ENCODE measurements at regions of chr1 and their contacts with region 1.

Region 1: DNA sequence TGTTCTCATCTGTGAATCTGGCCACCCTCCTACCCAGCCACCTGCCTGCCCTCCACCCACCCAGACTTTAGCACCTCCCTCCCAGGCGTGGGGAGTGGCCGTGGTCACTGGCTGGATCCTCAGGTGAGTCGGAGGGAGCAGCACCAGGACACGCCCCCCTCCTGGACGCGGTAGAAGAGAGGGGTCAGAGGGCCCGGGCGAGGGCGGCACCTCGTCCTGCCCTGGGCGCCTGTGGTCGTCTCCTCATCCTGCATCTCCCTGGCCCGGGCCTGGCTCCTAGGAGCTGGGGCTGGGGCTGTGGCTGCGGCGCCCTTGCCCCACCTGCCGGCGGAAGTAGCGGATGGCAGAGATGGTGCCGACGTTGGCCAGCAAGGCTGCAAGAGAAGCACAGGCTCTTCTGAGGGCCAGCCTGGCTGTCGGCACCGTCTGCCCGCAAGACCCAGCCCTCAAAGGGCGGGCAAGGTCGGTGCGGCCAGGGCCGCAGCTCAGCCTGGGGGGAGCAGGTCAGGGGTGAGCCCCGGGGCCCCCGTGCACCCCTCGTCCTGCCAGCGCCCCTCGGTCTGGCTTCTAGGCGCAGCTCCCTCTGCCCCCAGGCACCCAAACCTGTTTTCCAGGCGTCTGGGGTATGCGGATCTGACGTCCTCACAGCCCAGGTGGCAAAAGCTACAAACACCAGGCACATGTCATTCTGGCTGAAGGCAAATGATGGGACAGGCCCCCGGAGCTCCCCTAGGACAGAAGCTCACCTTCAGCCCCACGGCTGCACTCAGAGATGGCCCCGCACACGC is 5.8 kb downstream of the PERM1 start:
- DNase-seq: peak; percentile 77
- H3K4me3 ChIP-seq: no peak overlapping the region
- H3K27ac ChIP-seq: no peak overlapping the region
- H3K4me1 ChIP-seq: peaks cover 5% of the 10 kb centered on the region
- H3K27me3 ChIP-seq: no peaks in the 10 kb centered on the region
- CTCF ChIP-seq: peak; percentile 53 to 68 (median 62)
- POLR2A ChIP-seq: no peak

Region 2: DNA sequence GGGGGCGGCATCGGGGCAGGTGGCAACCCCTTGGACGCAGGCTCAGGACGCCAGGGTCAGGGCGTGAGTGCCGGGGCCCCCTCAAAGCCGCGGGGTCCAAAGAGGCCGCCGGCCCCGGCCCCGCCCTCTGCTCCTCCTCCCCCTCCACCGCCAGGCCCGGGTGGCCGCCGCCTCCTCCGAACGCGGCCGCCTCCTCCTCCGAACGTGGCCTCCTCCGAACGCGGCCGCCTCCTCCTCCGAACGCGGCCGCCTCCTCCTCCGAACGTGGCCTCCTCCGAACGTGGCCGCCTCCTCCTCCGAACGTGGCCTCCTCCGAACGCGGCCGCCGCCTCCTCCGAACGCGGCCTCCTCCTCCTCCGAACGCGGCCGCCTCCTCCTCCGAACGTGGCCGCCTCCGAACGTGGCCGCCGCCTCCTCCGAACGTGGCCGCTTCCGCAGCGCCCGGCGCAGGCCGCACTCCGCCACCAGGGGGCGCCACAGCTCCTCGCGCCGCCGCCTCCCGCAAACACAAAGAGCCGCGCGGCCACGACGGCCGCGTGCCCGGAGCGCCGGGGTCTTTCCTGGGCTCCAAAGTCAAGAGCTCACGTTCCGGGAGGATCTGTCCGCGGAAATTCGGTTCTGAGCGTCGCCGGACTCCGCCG is 71.7 kb before region 1 on chr1:
- intact Hi-C with region 1: loop called (anchors 10 kb)
- DNase-seq: peak; percentile 85
- H3K4me3 ChIP-seq: peak overlapping the region; percentile 47 to 49
- H3K27ac ChIP-seq: peak overlapping the region; percentile 19 to 59
- H3K4me1 ChIP-seq: peaks cover 15% of the 10 kb centered on the region
- H3K27me3 ChIP-seq: no peaks in the 10 kb centered on the region
- CTCF ChIP-seq: peak; percentile 97 to 99 (median 98)
- POLR2A ChIP-seq: no peak

Region 3: DNA sequence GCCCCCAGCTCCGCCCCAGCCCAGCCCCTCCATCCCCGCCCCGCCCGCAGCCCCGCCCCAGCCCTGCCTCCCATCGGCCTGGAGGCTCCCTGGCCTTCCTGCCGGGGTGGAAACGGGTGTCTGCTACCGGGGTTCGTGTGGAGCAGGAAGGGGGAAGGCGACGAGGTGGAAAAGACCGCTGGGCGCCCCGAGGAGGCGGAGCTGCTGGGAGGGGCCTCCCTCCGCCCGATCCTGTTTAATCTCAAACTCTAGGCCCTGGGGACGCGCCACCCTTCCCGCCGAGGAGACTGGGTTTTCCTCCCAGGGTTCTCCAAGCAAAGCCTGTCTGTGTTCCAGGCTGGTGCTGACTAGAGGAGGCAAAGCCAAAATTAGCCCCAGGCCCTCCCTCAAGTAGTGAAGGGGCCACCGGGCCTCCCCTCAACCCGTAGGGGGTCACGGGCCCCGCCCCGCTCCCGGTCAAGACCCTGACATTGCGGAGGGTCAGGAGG is 181.4 kb after region 1 on chr1:
- intact Hi-C with region 1: no loop called
- DNase-seq: peak; percentile 82
- H3K4me3 ChIP-seq: peak overlapping the region; percentile 13 to 71
- H3K27ac ChIP-seq: peak overlapping the region; percentile 78 to 79
- H3K4me1 ChIP-seq: peaks cover 8% of the 10 kb centered on the region
- H3K27me3 ChIP-seq: no peaks in the 10 kb centered on the region
- CTCF ChIP-seq: no peak
- POLR2A ChIP-seq: no peak

Measured in testis (tissue), 5 donors.